Posterior vena cava (tissue), 2 donors: ENCODE measurements at regions of chr13 and their contacts with region 1.

Region 1: DNA sequence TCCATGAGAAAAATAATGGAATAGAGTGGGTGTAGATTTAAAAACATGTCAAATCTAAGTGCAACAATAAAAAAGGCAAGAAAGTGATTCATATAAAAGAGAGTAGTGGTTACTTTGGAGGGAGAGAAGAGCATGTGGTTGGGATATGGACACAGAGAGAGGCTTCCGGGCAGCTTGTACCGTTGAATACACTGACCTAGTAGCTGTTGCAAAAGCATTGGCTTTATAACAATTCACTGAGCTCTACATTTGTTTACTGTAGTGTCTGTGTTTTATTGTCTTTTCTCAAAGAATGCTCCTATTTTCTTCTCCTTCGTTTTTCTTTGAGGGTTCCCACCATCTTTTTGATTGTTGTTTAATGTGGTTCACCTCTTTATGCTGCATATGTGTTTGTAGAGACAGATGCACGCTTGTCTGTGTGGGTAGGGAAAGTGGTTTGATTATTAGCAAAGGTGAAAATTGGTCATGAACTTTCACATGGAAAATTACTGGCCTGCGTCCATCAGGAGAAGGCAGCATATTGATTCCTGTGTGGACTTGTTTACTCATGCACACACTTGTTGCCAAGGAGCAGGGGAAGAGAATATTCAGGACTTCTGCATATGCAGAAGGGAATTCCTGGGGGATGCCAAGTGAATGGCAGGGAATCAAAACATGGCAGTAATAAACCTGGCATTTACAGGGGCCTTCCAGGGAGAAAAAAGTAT is 29.9 kb upstream of the IRS2 start:
- DNase-seq: no peak

Region 2: GRCh38 chr13:109867766-109868165 is 51.5 kb after region 1 on chr13:
- intact Hi-C with region 1: loop called in 1 of 2 experiments (anchors 2 kb)
- DNase-seq: no peak